ENCODE measurements at regions of chr3 and their contacts with region 1.

Region 1: GRCh38 chr3:102180291-102181039 is 254.3 kb upstream of the ZPLD1 start:
- DNase-seq: peak; percentile 95
- ATAC-seq: peak; percentile 71
- H3K4me3 ChIP-seq: no peak overlapping the region
- H3K27ac ChIP-seq: peak overlapping the region; percentile 84; the same call in 1 of the 2 replicates
- H3K4me1 ChIP-seq: peaks cover 20% of the 10 kb centered on the region
- H3K27me3 ChIP-seq: no peaks in the 10 kb centered on the region
- CTCF ChIP-seq: no peak
- POLR2A ChIP-seq: peak; percentile 78; the same call in 1 of the 2 replicates
- RAD21 ChIP-seq: no peak

Region 2: GRCh38 chr3:101936419-101937356 is 243.8 kb before region 1 on chr3:
- CTCF ChIA-PET with region 1: no interaction called
- POLR2A ChIA-PET with region 1: no interaction called
- dilution Hi-C with region 1: no loop called
- in situ Hi-C with region 1: no loop called
- intact Hi-C with region 1: loop called (anchors 2 kb)
- DNase-seq: peak; percentile 94
- ATAC-seq: peak; percentile 44
- H3K4me3 ChIP-seq: no peak overlapping the region
- H3K27ac ChIP-seq: peak overlapping the region; percentile 87
- H3K4me1 ChIP-seq: peaks cover 25% of the 10 kb centered on the region
- H3K27me3 ChIP-seq: no peaks in the 10 kb centered on the region
- CTCF ChIP-seq: no peak
- POLR2A ChIP-seq: no peak
- RAD21 ChIP-seq: no peak

Region 3: DNA sequence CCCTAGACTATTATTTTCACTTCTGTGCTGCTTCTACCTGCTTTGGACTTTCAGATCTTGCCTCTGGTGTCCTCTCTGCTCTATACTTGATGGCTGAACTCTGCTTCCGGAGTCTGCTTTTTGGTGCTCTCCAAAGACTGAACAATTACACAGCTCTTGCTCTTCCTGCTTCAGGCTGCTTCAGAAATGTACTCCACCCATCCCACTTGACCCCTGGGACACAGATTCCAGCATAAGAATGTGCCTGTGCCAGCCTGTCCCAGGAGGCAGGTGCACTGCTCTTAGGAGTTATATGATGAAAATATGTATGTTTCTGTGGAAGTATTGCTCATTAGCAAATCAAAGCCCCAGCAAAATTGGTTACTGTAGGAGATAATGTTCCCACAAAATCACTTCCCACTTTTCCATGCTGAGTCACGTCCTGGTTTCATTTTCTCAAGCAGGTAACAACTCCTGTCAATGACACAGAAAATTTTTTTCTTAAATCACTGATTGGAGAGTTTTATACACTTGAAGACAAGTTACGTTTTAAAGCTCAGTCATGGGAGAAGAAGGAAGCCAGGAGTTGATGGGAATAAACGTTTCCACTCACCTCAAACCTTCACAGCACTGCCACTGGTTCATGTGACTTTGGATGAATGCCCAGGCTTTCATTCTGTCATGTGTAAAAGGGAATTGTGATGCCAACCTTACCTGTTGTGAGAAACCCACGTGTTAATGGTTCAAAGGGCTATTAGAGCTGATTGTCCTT is 14.9 kb after region 1 on chr3:
- CTCF ChIA-PET with region 1: no interaction called
- POLR2A ChIA-PET with region 1: no interaction called
- dilution Hi-C with region 1: no loop called
- in situ Hi-C with region 1: no loop called
- intact Hi-C with region 1: loop called (anchors 2 kb)
- DNase-seq: no peak
- ATAC-seq: no peak
- H3K4me3 ChIP-seq: no peak overlapping the region
- H3K27ac ChIP-seq: no peak overlapping the region
- H3K4me1 ChIP-seq: no peaks in the 10 kb centered on the region; the same call in 1 of the 2 replicates
- H3K27me3 ChIP-seq: no peaks in the 10 kb centered on the region
- CTCF ChIP-seq: no peak
- POLR2A ChIP-seq: no peak
- RAD21 ChIP-seq: no peak